ENCODE measurements at regions of chr12 and their contacts with region 1.

Region 1: DNA sequence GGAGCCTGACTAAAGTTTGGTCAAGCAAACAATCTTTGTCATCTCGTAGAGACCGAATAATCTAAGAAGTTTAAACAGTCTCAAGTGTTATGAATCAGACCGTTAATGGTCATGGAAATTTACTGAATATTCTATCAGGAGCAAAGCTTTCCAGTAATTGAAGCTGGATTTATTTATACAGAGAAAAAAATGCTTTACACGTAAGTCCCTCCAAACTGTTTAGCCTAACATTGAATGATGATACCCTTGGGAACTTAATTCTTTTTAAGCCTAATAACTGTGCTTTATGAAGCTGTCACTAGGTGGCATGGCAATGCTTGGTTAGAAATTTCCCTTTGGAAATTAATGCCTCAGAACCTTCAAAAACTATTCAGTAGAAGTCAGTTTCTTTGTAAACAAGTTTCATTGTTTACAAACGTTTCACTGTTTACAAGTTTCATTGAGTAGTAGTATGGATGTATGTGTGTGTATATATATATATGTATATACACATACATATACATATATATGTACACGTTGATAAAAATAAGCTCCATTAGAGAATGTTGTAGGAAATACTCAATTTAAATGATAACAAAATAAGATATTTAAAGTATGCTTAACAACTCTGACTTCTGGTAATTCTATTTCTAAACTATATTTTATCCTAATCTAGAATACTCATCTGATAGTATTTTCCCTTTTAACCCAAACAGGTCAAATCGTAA is 32.1 kb downstream of the DEPDC4 start:
- DNase-seq: peak; percentile 9
- H3K4me3 Mint-ChIP-seq: no peak overlapping the region
- H3K27ac Mint-ChIP-seq: no peak overlapping the region
- H3K4me1 Mint-ChIP-seq: no peaks in the 10 kb centered on the region
- H3K27me3 Mint-ChIP-seq: no peaks in the 10 kb centered on the region

Region 2: DNA sequence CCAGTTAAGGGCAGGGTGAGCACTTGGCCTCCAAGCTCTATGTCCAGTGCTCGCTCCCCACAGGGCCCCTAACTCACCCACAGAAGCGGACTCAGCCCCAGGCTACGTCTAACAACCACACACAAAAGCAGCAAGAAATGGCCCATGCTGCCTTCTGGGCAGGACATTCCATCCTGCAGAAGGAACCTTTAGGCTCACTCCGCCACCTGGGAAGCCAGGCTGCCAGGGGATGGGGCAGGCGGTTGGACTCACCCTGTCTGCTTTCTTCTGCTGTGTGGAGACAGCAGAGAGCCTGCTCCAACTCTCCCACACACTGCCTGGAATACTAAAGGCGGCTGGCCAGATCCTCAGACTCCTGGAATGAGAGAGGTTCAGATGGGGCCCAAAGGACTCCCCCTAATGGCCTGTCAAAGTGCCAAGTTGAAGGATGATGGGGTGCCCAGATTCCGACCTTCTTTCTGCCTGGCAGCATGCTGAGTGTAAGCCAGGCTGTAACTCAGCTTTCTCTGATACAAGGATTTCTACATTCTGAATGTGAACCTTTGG is 64.4 kb before region 1 on chr12:
- CTCF ChIA-PET with region 1: no interaction called
- intact Hi-C with region 1: no loop called
- DNase-seq: no peak
- H3K4me3 Mint-ChIP-seq: no peak overlapping the region
- H3K27ac Mint-ChIP-seq: no peak overlapping the region
- H3K4me1 Mint-ChIP-seq: no peaks in the 10 kb centered on the region
- H3K27me3 Mint-ChIP-seq: no peaks in the 10 kb centered on the region

Region 3: GRCh38 chr12:100404769-100405407 is 170.1 kb after region 1 on chr12:
- CTCF ChIA-PET with region 1: interaction called, 4 read pairs
- intact Hi-C with region 1: loop called (anchors 1 kb)
- DNase-seq: peak; percentile 63
- H3K4me3 Mint-ChIP-seq: no peak overlapping the region
- H3K27ac Mint-ChIP-seq: no peak overlapping the region
- H3K4me1 Mint-ChIP-seq: no peaks in the 10 kb centered on the region
- H3K27me3 Mint-ChIP-seq: peaks cover 9% of the 10 kb centered on the region

Region 4: GRCh38 chr12:100554608-100555077 is 319.9 kb after region 1 on chr12:
- CTCF ChIA-PET with region 1: interaction called, 8 read pairs
- intact Hi-C with region 1: loop called (anchors 1 kb)
- DNase-seq: no peak
- H3K4me3 Mint-ChIP-seq: no peak overlapping the region
- H3K27ac Mint-ChIP-seq: no peak overlapping the region
- H3K4me1 Mint-ChIP-seq: no peaks in the 10 kb centered on the region
- H3K27me3 Mint-ChIP-seq: peaks cover 6% of the 10 kb centered on the region

Region 5: GRCh38 chr12:100668945-100669536 is 434.3 kb after region 1 on chr12:
- CTCF ChIA-PET with region 1: interaction called, 16 read pairs
- intact Hi-C with region 1: loop called (anchors 1 kb)
- DNase-seq: peak; percentile 70
- H3K4me3 Mint-ChIP-seq: no peak overlapping the region
- H3K27ac Mint-ChIP-seq: no peak overlapping the region
- H3K4me1 Mint-ChIP-seq: no peaks in the 10 kb centered on the region
- H3K27me3 Mint-ChIP-seq: peaks cover 9% of the 10 kb centered on the region